Caco-2 (cell line): ENCODE measurements at regions of chr14 and their contacts with region 1.

Region 1: GRCh38 chr14:52950898-52951689 is at the start of gene FERMT2:
- DNase-seq: peak; percentile 89 to 96
- H3K4me3 ChIP-seq: peak within 1 kb of the TSS; percentile 99
- H3K4me3 Mint-ChIP-seq: peak within 1 kb of the TSS; percentile 94
- H3K27ac Mint-ChIP-seq: peak within 1 kb of the TSS; percentile 73
- H3K4me1 ChIP-seq: peaks cover 28% of the 10 kb centered on the region
- H3K4me1 Mint-ChIP-seq: peaks cover 17% of the 10 kb centered on the region
- H3K27me3 ChIP-seq: no peaks in the 10 kb centered on the region
- H3K27me3 Mint-ChIP-seq: no peaks in the 10 kb centered on the region
- CTCF ChIP-seq: peak in 1 of 2 experiments; percentile 19
- total RNA-seq, gene FERMT2: 33.5 and 40.8 TPM in 2 replicates

Region 2: GRCh38 chr14:52536269-52536668 is 414.8 kb before region 1 on chr14:
- CTCF ChIA-PET with region 1: interaction called, 11 read pairs
- POLR2A ChIA-PET with region 1: no interaction called
- intact Hi-C with region 1: no loop called
- DNase-seq: no peak
- H3K4me3 ChIP-seq: no peak overlapping the region
- H3K4me3 Mint-ChIP-seq: no peak overlapping the region
- H3K27ac Mint-ChIP-seq: no peak overlapping the region
- H3K4me1 ChIP-seq: no peaks in the 10 kb centered on the region
- H3K4me1 Mint-ChIP-seq: no peaks in the 10 kb centered on the region
- H3K27me3 ChIP-seq: no peaks in the 10 kb centered on the region
- H3K27me3 Mint-ChIP-seq: no peaks in the 10 kb centered on the region
- CTCF ChIP-seq: no peak

Region 3: GRCh38 chr14:52663850-52664249 is 287.2 kb before region 1 on chr14:
- CTCF ChIA-PET with region 1: no interaction called
- POLR2A ChIA-PET with region 1: no interaction called
- intact Hi-C with region 1: no loop called
- DNase-seq: no peak
- H3K4me3 ChIP-seq: no peak overlapping the region
- H3K4me3 Mint-ChIP-seq: no peak overlapping the region
- H3K27ac Mint-ChIP-seq: no peak overlapping the region
- H3K4me1 ChIP-seq: no peaks in the 10 kb centered on the region
- H3K4me1 Mint-ChIP-seq: no peaks in the 10 kb centered on the region
- H3K27me3 ChIP-seq: no peaks in the 10 kb centered on the region
- H3K27me3 Mint-ChIP-seq: no peaks in the 10 kb centered on the region
- CTCF ChIP-seq: no peak

Region 4: DNA sequence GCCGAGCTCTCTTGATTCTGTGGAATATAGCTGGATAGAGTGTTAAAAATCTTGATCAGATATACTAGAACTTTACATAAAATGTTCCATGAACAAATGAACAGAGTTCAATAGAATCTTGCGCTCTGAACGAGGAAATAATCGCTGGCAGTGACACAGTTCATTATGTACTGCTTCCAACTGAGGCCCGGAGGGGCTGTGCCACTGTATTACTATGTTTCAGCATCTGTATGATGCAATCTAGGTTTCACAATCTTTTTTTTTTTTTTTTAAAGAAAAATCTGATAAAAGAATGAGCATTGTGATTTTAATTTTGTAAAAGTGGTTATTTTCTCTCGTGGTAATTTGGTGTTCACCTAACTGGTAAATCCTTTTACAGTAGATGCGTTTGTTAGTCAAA is 77.4 kb before region 1 on chr14:
- CTCF ChIA-PET with region 1: no interaction called
- POLR2A ChIA-PET with region 1: interaction called, 10 read pairs
- intact Hi-C with region 1: no loop called
- DNase-seq: no peak
- H3K4me3 ChIP-seq: no peak overlapping the region
- H3K4me3 Mint-ChIP-seq: no peak overlapping the region
- H3K27ac Mint-ChIP-seq: no peak overlapping the region
- H3K4me1 ChIP-seq: no peaks in the 10 kb centered on the region
- H3K4me1 Mint-ChIP-seq: no peaks in the 10 kb centered on the region
- H3K27me3 ChIP-seq: no peaks in the 10 kb centered on the region
- H3K27me3 Mint-ChIP-seq: no peaks in the 10 kb centered on the region
- CTCF ChIP-seq: no peak

Region 5: DNA sequence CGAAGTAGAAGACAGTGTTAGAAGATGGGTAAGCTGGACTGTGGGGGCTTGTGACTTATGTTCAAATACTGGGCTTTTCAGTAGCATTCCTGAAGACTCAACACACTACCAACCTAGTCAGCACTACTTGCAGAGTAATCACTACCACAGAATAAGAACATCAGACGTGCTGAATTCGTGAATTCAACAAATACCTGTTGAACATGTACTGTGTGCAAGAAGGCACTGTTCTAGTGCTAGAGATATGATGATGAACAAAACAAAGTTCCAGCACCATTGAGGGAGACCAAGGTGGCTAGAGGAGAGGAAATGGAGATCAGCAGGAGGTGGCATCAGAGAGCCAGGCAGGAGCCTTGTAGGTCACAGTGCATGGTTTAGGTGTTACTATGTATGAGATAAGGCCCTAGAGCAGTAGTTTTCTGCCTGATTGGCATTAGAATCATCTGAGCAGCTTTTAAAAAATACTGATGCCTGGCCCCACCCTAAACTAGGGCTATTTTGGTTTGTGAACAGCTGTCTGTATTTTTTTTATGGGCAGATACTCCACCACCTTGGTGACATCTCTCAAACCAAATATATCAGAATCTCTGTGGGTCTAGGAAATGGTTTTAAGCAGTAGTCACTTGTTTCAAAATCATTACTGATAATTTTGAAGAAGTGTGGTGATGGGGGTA is 27.1 kb before region 1 on chr14:
- CTCF ChIA-PET with region 1: interaction called, 3 read pairs
- POLR2A ChIA-PET with region 1: interaction called, 4 read pairs
- intact Hi-C with region 1: loop called (anchors 2 kb)
- DNase-seq: peak in 1 of 2 experiments; percentile 32
- H3K4me3 ChIP-seq: no peak overlapping the region
- H3K4me3 Mint-ChIP-seq: no peak overlapping the region
- H3K27ac Mint-ChIP-seq: no peak overlapping the region
- H3K4me1 ChIP-seq: peaks cover 22% of the 10 kb centered on the region
- H3K4me1 Mint-ChIP-seq: peaks cover 15% of the 10 kb centered on the region
- H3K27me3 ChIP-seq: no peaks in the 10 kb centered on the region
- H3K27me3 Mint-ChIP-seq: no peaks in the 10 kb centered on the region
- CTCF ChIP-seq: peak; percentile 12 to 45

Region 6: DNA sequence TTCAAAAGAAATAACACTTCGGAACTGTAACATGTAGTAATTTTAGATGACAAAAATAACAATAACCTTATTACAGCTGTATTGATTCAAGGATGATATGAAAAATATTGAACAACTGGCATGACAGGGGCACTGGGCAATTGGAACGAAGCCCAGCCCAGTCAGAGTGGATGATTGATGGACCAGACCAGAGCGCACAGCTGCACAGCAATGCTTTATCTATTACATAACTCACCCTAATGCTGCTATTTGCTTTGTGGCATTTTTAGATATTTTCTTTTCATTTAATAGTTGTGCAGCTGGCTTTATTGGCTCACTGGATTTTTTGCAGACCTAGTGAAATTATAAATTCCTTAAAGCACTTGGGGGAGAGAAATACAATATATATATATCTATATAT is 26.7 kb after region 1 on chr14:
- CTCF ChIA-PET with region 1: no interaction called
- POLR2A ChIA-PET with region 1: no interaction called
- intact Hi-C with region 1: no loop called
- DNase-seq: no peak
- H3K4me3 ChIP-seq: no peak overlapping the region
- H3K4me3 Mint-ChIP-seq: no peak overlapping the region
- H3K27ac Mint-ChIP-seq: no peak overlapping the region
- H3K4me1 ChIP-seq: no peaks in the 10 kb centered on the region
- H3K4me1 Mint-ChIP-seq: no peaks in the 10 kb centered on the region
- H3K27me3 ChIP-seq: no peaks in the 10 kb centered on the region
- H3K27me3 Mint-ChIP-seq: peaks cover 3% of the 10 kb centered on the region
- CTCF ChIP-seq: no peak

Region 7: DNA sequence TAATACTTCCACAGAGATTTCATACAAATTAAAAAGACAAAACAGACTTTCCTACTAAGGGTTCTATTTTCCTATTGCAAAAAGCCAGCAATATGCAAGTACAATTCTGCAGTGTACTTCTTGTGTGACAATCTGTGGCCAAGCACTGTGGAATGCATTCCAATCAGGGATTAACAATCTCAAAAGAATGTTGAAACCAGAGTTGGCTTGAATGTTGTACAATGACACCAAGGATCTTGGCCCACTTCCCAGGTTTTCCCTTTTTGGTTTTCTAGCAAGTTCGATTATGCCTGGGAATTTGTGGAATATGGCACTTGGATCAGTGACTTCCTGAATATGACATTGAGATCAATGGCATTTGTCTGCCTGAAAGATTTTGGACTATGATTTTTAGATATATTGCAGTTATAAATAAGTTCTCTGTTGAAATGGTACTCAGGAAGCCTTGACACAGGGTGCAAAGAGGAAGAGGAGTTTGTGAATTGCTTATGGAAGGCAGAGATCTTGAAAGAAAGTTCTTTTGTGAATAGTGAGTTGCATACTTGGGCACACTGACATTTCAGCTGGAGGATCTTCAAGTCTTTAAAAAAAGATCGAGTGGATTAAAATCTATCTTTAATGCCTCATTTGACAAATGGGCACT is 81.2 kb after region 1 on chr14:
- CTCF ChIA-PET with region 1: no interaction called
- POLR2A ChIA-PET with region 1: no interaction called
- intact Hi-C with region 1: no loop called
- DNase-seq: no peak
- H3K4me3 ChIP-seq: no peak overlapping the region
- H3K4me3 Mint-ChIP-seq: no peak overlapping the region
- H3K27ac Mint-ChIP-seq: no peak overlapping the region
- H3K4me1 ChIP-seq: peaks cover 10% of the 10 kb centered on the region
- H3K4me1 Mint-ChIP-seq: peaks cover 6% of the 10 kb centered on the region
- H3K27me3 ChIP-seq: no peaks in the 10 kb centered on the region
- H3K27me3 Mint-ChIP-seq: no peaks in the 10 kb centered on the region
- CTCF ChIP-seq: no peak